ENCODE measurements at regions of chr4 and their contacts with region 1.

Region 1: GRCh38 chr4:173019711-173020110 is 148.9 kb upstream of the GALNT7 start:
- DNase-seq: no peak
- ATAC-seq: no peak
- H3K4me3 ChIP-seq: no peak overlapping the region
- H3K27ac ChIP-seq: no peak overlapping the region
- H3K4me1 ChIP-seq: no peaks in the 10 kb centered on the region
- H3K27me3 ChIP-seq: no peaks in the 10 kb centered on the region
- CTCF ChIP-seq: no peak

Region 2: GRCh38 chr4:173257732-173258717 is 238.3 kb after region 1 on chr4:
- intact Hi-C with region 1: loop called in 1 of 3 experiments (anchors 5 kb)
- DNase-seq: peak in 3 of 6 donors; percentile 33 to 58 (median 37)
- ATAC-seq: peak; percentile 55 to 96 (median 92)
- H3K4me3 ChIP-seq: no peak overlapping the region
- H3K27ac ChIP-seq: no peak overlapping the region
- H3K4me1 ChIP-seq: peaks cover 0 to 3% (median 0%) of the 10 kb centered on the region in 3 donors
- H3K27me3 ChIP-seq: no peaks in the 10 kb centered on the region
- CTCF ChIP-seq: peak in 3 of 4 donors; percentile 51 to 63 (median 56)

Region 3: GRCh38 chr4:173436149-173436579 is 416.5 kb after region 1 on chr4:
- intact Hi-C with region 1: no loop called
- DNase-seq: no peak
- ATAC-seq: no peak
- H3K4me3 ChIP-seq: no peak overlapping the region
- H3K27ac ChIP-seq: no peak overlapping the region
- H3K4me1 ChIP-seq: no peaks in the 10 kb centered on the region
- H3K27me3 ChIP-seq: no peaks in the 10 kb centered on the region
- CTCF ChIP-seq: no peak

Measured in pancreas (tissue), 10 donors.